B cell (primary cell): ENCODE measurements at regions of chr15 and their contacts with region 1.

Region 1: DNA sequence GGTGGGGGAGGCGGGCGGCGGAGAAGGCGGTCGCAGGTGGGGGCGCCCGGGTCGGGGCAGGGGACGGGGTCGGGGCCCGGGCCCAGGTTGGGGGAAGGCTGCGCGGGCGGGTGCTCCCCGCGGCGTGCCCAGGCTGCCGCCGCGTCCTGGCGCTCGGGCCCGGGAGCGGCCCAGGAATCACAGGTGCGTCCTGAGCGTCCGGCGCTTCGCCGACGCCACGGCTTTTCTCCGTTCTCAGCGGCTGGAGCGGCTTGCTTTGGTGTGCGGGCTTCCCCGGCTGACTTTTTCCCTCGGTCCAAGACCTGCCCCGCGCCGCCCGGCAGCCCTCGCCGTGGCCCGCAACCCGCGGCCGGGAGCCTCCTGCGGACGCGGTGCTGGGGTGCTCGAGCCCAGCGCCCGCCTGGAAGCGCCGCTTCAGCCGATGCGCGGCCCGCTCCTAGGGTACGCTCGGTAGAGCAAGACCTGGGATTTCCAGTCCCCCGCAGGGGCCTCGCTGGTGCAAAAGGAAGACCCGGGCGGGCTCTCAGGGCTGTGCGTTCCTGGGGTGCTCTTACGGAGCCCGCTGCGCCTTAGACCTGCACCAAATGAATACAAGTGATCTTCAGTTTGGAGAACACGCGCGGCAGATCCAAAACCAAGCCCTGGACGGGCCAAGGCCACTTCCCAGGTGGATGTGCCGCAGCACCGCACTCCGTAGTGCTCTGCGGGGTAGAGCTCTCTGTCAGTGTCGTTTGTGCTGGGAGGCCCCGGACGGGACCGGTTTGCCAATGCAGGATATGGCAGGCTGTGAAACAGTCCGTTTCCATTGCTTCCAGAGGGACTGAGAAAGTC is 639 bp downstream of the NIPA1 start:
- DNase-seq: peak; percentile 64
- ATAC-seq: peak; percentile 6
- H3K4me3 ChIP-seq: peak overlapping the region in 4 of 5 experiments; percentile 41 to 75 (median 70)
- H3K4me3 Mint-ChIP-seq: peak overlapping the region; percentile 88
- H3K27ac ChIP-seq: peak overlapping the region in 1 of 2 donors; percentile 71
- H3K27ac Mint-ChIP-seq: peak overlapping the region; percentile 93
- H3K4me1 ChIP-seq: peaks cover 8 to 34% of the 10 kb centered on the region in 2 donors
- H3K4me1 Mint-ChIP-seq: peaks cover 31% of the 10 kb centered on the region
- H3K27me3 ChIP-seq: no peaks in the 10 kb centered on the region
- H3K27me3 Mint-ChIP-seq: no peaks in the 10 kb centered on the region
- CTCF ChIP-seq: no peak

Region 2: DNA sequence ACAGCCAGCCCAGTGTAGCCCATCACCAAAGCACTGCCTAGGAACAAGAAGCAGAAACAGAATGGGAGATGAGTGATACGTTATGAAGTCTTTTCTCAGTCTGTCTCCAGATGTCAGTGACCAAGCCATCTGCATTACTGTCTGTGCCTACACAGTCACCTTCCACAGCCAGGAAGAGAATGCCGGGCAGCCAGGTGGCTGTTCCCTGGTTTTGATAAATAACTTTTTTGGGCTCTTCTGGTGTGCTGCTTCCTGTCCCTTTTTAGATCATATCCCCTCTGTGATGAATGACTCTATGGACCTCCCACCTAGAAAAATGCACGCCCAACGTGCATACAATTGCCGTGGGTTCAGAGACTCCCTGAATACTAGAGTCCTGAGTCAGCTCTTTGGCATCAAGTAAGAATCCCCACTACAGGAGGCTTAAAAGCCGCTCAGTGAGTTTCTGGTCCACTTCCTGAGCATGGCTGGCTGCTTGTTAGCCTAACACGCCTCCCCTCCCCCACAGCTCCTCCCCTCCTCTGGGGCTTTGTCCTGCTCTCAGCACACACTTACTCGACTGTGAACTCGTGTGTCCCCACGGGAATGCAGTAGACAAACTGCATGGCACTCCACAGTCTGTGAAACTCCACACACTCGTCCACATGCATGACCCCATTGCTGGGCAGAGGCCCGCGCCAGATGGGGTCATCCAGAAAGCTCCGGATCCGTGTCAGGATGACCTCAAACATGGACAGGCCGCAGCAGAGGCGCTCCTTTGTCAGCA is 86.0 kb after region 1 on chr15:
- CTCF ChIA-PET with region 1: no interaction called
- POLR2A ChIA-PET with region 1: no interaction called
- intact Hi-C with region 1: no loop called
- DNase-seq: no peak
- ATAC-seq: no peak
- H3K4me3 ChIP-seq: no peak overlapping the region
- H3K4me3 Mint-ChIP-seq: no peak overlapping the region
- H3K27ac ChIP-seq: no peak overlapping the region
- H3K27ac Mint-ChIP-seq: no peak overlapping the region
- H3K4me1 ChIP-seq: no peaks in the 10 kb centered on the region
- H3K4me1 Mint-ChIP-seq: no peaks in the 10 kb centered on the region
- H3K27me3 ChIP-seq: no peaks in the 10 kb centered on the region
- H3K27me3 Mint-ChIP-seq: no peaks in the 10 kb centered on the region
- CTCF ChIP-seq: no peak

Region 3: DNA sequence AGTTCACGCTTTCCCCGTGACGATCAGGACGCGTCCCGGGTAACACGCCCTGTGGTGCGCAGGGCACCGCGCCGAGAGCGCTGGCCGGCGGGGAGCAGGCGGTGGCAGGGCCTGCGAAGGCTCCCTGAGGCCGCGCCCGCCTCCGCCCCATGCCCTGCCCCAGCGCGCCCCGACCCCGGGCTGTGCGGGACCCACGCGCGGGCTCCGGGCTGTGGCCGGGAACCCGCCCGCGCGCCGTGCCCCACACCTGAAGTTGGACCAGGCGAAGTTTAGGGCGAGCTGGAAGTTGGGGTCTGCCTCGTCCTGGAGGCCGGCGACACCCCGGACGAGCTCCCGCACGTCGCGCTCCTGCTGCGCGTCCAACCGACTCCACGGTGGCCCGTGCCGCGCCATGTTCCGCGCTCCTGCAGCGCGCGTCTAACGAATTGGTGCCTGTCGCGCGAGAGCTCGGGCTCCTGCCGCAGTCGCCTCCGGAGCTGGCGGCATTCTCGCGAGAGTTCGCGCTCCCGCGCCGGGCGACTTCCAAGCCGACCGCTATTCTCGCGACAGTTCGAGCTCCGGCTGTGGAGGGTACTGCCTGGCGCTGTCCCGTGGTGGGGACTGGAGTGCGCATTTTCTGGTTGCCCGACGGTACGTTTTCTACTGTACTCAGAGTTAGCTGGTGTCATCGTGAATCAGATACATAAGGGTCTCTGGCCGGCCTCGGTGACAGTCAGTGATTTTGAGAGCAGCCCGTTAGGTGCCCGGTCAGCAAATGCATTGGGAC is 252.3 kb after region 1 on chr15 and contains the start of gene TUBGCP5:
- CTCF ChIA-PET with region 1: no interaction called
- POLR2A ChIA-PET with region 1: interaction called, 3 read pairs
- intact Hi-C with region 1: loop called (anchors 5 kb)
- DNase-seq: peak; percentile 95
- ATAC-seq: peak; percentile 94
- H3K4me3 ChIP-seq: peak within 1 kb of the TSS; percentile 42 to 75 (median 62)
- H3K4me3 Mint-ChIP-seq: peak within 1 kb of the TSS; percentile 97
- H3K27ac ChIP-seq: peak within 1 kb of the TSS; percentile 24 to 25
- H3K27ac Mint-ChIP-seq: peak within 1 kb of the TSS; percentile 91
- H3K4me1 ChIP-seq: peaks cover 8 to 10% of the 10 kb centered on the region in 2 donors
- H3K4me1 Mint-ChIP-seq: peaks cover 10% of the 10 kb centered on the region
- H3K27me3 ChIP-seq: no peaks in the 10 kb centered on the region
- H3K27me3 Mint-ChIP-seq: no peaks in the 10 kb centered on the region
- CTCF ChIP-seq: peak; percentile 35
- total RNA-seq, gene TUBGCP5: 16.9 and 23.1 TPM in 2 replicates

Region 4: DNA sequence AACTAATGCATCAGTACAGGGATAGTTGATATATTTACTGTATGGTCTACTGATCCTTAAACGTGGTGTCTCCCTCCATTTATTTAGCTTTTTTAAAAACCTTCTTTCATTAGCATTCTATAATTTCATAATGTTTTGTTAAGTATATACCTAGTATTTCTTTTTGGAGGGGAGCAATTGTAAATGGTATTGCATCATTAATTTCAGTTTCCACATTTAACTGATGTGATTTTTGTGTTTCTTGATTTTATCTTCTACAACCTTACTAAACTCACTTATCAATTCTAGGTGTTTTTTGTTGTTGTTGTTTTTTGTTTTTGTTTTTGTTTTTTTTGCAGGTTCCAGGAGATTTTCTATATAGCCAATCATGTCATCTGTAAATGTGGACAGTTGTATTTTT is 331.1 kb after region 1 on chr15:
- CTCF ChIA-PET with region 1: no interaction called
- POLR2A ChIA-PET with region 1: no interaction called
- intact Hi-C with region 1: no loop called
- DNase-seq: no peak
- ATAC-seq: no peak
- H3K4me3 ChIP-seq: no peak overlapping the region
- H3K4me3 Mint-ChIP-seq: no peak overlapping the region
- H3K27ac ChIP-seq: no peak overlapping the region
- H3K27ac Mint-ChIP-seq: no peak overlapping the region
- H3K4me1 ChIP-seq: no peaks in the 10 kb centered on the region
- H3K4me1 Mint-ChIP-seq: no peaks in the 10 kb centered on the region
- H3K27me3 ChIP-seq: no peaks in the 10 kb centered on the region
- H3K27me3 Mint-ChIP-seq: peaks cover 21% of the 10 kb centered on the region
- CTCF ChIP-seq: no peak